MCF 10A (cell line): ENCODE measurements at regions of chr11 and their contacts with region 1.

Region 1: GRCh38 chr11:65711785-65712632 is at the start of gene KAT5:
- DNase-seq: peak; percentile 98
- H3K4me3 Mint-ChIP-seq: peak within 1 kb of the TSS; percentile 80
- H3K27ac Mint-ChIP-seq: peak within 1 kb of the TSS; percentile 99
- H3K4me1 Mint-ChIP-seq: no peaks in the 10 kb centered on the region
- H3K27me3 Mint-ChIP-seq: no peaks in the 10 kb centered on the region
- CTCF ChIP-seq: peak; percentile 95
- total RNA-seq, gene KAT5: 37.6 and 48.1 TPM in 2 replicates

Region 2: DNA sequence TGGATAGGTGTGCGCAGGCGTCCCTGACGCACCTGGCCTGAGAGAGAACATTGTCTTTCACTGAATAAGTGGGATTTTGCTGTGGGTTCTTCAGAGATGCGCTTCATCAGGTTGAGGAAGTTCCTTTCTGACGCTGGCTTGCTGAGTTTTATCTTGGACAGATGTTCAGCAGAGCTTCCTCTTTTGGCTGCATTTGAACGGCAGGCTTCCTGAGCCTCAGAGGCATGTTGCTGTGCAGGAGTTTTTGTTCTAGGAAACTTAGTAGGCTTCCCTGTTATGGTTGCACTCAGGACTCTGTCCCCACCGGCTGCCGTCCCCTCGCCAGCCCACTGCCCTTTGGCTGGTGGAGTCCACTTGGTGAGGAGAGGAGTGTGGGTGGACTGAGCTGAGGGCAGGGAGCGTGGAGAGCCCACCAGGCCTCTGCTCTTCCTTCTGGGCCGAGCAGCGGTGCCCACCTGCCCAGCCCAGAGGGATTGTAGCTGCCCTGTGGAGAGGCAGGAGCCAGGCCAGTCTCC is 308.3 kb before region 1 on chr11:
- CTCF ChIA-PET with region 1: no interaction called
- POLR2A ChIA-PET with region 1: no interaction called
- intact Hi-C with region 1: no loop called
- DNase-seq: no peak
- H3K4me3 Mint-ChIP-seq: no peak overlapping the region
- H3K27ac Mint-ChIP-seq: no peak overlapping the region
- H3K4me1 Mint-ChIP-seq: no peaks in the 10 kb centered on the region
- H3K27me3 Mint-ChIP-seq: no peaks in the 10 kb centered on the region
- CTCF ChIP-seq: no peak

Region 3: DNA sequence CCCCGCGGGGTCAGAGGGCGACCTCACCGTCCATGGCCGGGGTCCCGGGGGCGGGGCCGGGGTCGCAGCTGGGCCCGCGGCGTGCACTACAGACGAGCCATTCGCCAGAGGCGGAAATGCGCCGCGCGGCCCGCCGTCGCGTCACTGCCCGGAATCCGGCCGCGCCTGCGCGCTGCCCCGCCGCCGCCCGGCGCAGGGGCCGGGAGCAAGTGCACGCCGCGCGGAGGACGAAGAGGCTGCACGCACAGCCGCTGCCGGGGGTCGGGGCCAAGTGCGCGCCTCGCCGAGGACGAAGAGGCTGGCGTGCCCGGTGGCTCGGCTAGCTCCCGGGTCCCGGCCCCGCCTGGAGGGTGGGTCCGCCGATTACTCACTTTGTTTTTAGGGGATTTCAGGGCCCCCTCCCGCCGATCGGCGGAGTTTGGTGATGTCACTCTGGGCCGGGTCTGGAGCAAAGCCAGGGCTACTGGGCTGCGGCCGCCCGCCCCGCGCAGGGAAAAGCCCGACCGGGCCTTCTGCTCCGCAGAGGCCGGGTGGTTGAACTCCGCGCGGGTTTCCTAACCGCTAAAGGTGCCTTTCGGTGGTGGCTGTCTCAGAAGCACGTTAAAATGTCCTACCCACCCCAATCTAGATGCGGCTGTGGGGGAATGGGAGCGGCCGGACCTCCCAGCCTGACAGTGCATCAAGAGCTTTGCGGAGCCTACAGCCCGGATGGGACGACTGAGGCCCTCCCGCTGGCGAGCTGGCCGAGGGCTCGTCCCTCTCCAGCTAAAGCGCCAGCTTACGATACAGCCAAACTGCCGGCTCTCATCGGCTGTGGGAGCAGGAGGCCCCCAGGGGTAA is 49.0 kb before region 1 on chr11 and contains the start of gene RELA:
- CTCF ChIA-PET with region 1: interaction called, 3 read pairs
- POLR2A ChIA-PET with region 1: interaction called, 16 read pairs
- intact Hi-C with region 1: no loop called
- DNase-seq: peak; percentile 91
- H3K4me3 Mint-ChIP-seq: peak within 1 kb of the TSS; percentile 74
- H3K27ac Mint-ChIP-seq: peak within 1 kb of the TSS; percentile 73
- H3K4me1 Mint-ChIP-seq: peaks cover 12% of the 10 kb centered on the region
- H3K27me3 Mint-ChIP-seq: no peaks in the 10 kb centered on the region
- CTCF ChIP-seq: no peak
- total RNA-seq, gene RELA: 82.1 and 83.0 TPM in 2 replicates

Region 4: GRCh38 chr11:65766535-65766934 is 54.5 kb after region 1 on chr11:
- CTCF ChIA-PET with region 1: interaction called, 17 read pairs
- POLR2A ChIA-PET with region 1: interaction called, 13 read pairs
- intact Hi-C with region 1: loop called (anchors 1 kb)
- DNase-seq: peak; percentile 56
- H3K4me3 Mint-ChIP-seq: no peak overlapping the region
- H3K27ac Mint-ChIP-seq: no peak overlapping the region
- H3K4me1 Mint-ChIP-seq: peaks cover 23% of the 10 kb centered on the region
- H3K27me3 Mint-ChIP-seq: no peaks in the 10 kb centered on the region
- CTCF ChIP-seq: no peak

Region 5: GRCh38 chr11:65773784-65774411 is 61.9 kb after region 1 on chr11:
- CTCF ChIA-PET with region 1: interaction called, 22 read pairs
- POLR2A ChIA-PET with region 1: interaction called, 33 read pairs
- intact Hi-C with region 1: loop called (anchors 1 kb)
- DNase-seq: no peak
- H3K4me3 Mint-ChIP-seq: no peak overlapping the region
- H3K27ac Mint-ChIP-seq: no peak overlapping the region
- H3K4me1 Mint-ChIP-seq: peaks cover 18% of the 10 kb centered on the region
- H3K27me3 Mint-ChIP-seq: no peaks in the 10 kb centered on the region
- CTCF ChIP-seq: no peak

Region 6: GRCh38 chr11:65988791-65989592 is 277.0 kb after region 1 on chr11:
- CTCF ChIA-PET with region 1: interaction called, 7 read pairs
- POLR2A ChIA-PET with region 1: interaction called, 4 read pairs
- intact Hi-C with region 1: loop called (anchors 1 kb)
- DNase-seq: peak; percentile 96
- H3K4me3 Mint-ChIP-seq: no peak overlapping the region
- H3K27ac Mint-ChIP-seq: no peak overlapping the region
- H3K4me1 Mint-ChIP-seq: peaks cover 5% of the 10 kb centered on the region
- H3K27me3 Mint-ChIP-seq: no peaks in the 10 kb centered on the region
- CTCF ChIP-seq: peak; percentile 93

Region 7: GRCh38 chr11:66001942-66002647 is 290.1 kb after region 1 on chr11 and contains the starts of genes BANF1 and EIF1AD:
- CTCF ChIA-PET with region 1: no interaction called
- POLR2A ChIA-PET with region 1: interaction called, 11 read pairs
- intact Hi-C with region 1: no loop called
- DNase-seq: peak; percentile 99
- H3K4me3 Mint-ChIP-seq: peak within 1 kb of the TSS; percentile 97
- H3K27ac Mint-ChIP-seq: peak within 1 kb of the TSS; percentile 96
- H3K4me1 Mint-ChIP-seq: no peaks in the 10 kb centered on the region
- H3K27me3 Mint-ChIP-seq: no peaks in the 10 kb centered on the region
- CTCF ChIP-seq: no peak
- total RNA-seq, gene BANF1: 154 and 198 TPM in 2 replicates
- total RNA-seq, gene EIF1AD: 21.7 and 33.5 TPM in 2 replicates